ENCODE measurements at regions of chr17 and their contacts with region 1.

Region 1: GRCh38 chr17:82518826-82519810 is at the start of gene FOXK2:
- DNase-seq: peak; percentile 86 to 98 (median 92)
- ATAC-seq: peak; percentile 98
- H3K4me3 ChIP-seq: peak within 1 kb of the TSS; percentile 56 to 84
- H3K4me3 Mint-ChIP-seq: peak within 1 kb of the TSS; percentile 86
- H3K27ac ChIP-seq: peak within 1 kb of the TSS; percentile 84 to 85
- H3K27ac Mint-ChIP-seq: peak within 1 kb of the TSS; percentile 89
- H3K4me1 ChIP-seq: peaks cover 17% of the 10 kb centered on the region
- H3K4me1 Mint-ChIP-seq: peaks cover 31% of the 10 kb centered on the region
- H3K27me3 ChIP-seq: no peaks in the 10 kb centered on the region
- H3K27me3 Mint-ChIP-seq: no peaks in the 10 kb centered on the region
- CTCF ChIP-seq: no peak
- total RNA-seq, gene FOXK2: 36.1 to 37.7 TPM

Region 2: DNA sequence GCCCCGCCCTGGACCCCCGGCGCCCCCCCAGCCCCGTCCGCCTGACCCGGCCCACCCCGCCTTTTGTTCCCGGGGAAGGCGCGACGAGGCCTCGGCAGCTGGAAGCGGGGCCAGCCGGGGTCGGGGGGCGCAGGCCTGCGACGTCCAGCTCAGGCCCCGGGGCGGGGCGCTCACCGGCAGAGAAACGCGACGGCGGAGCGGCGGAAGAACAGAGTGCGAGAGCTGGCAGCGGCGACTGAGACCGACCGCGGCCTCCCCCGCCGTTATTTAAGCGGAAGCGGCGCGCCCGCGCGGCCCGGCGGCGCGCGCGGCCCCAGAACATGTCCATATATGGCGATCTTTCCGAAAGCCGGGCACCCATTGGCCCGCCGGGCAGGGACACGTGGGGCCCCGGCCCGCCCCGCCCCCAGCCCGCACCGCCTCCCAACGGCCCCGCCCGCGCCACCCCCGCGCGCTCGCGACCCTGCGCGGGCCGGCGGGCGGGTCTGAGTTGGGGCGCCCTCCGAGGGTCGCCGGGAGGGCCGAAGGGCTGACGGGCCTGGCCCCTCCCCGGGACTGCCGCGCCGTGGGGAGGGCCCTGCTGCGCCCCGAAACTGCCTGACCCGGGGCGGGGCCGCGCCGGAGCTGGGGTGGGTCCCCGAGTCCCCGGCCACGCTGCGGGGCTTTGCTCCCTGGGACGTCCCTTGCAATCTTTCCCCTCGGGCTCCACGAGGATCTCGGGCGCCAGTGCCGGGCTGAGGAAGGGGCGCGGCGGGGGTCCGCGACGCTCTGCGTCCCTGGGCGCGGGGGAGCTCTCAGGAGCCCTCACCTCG is 1006.4 kb before region 1 on chr17 and contains the start of gene ACTG1:
- CTCF ChIA-PET with region 1: no interaction called
- POLR2A ChIA-PET with region 1: no interaction called
- intact Hi-C with region 1: loop called in 1 of 2 experiments (anchors 5 kb)
- DNase-seq: peak; percentile 87 to 97 (median 92)
- ATAC-seq: peak; percentile 60
- H3K4me3 ChIP-seq: peak within 1 kb of the TSS; percentile 84 to 93
- H3K4me3 Mint-ChIP-seq: peak within 1 kb of the TSS; percentile 98
- H3K27ac ChIP-seq: peak within 1 kb of the TSS; percentile 56 to 93
- H3K27ac Mint-ChIP-seq: peak within 1 kb of the TSS; percentile 98
- H3K4me1 ChIP-seq: peaks cover 49% of the 10 kb centered on the region
- H3K4me1 Mint-ChIP-seq: peaks cover 57% of the 10 kb centered on the region
- H3K27me3 ChIP-seq: no peaks in the 10 kb centered on the region
- H3K27me3 Mint-ChIP-seq: no peaks in the 10 kb centered on the region
- CTCF ChIP-seq: no peak
- total RNA-seq, gene ACTG1: 1,370 to 1,375 TPM

Region 3: GRCh38 chr17:82450170-82451106 is 68.7 kb before region 1 on chr17 and contains the start of gene CYBC1:
- CTCF ChIA-PET with region 1: no interaction called
- POLR2A ChIA-PET with region 1: interaction called, 5 read pairs
- intact Hi-C with region 1: loop called (anchors 1 to 2 kb)
- DNase-seq: peak; percentile 86 to 97 (median 95)
- ATAC-seq: peak; percentile 65
- H3K4me3 ChIP-seq: peak within 1 kb of the TSS; percentile 57 to 77
- H3K4me3 Mint-ChIP-seq: peak within 1 kb of the TSS; percentile 90
- H3K27ac ChIP-seq: peak within 1 kb of the TSS; percentile 87 to 94
- H3K27ac Mint-ChIP-seq: peak within 1 kb of the TSS; percentile 95
- H3K4me1 ChIP-seq: peaks cover 26% of the 10 kb centered on the region
- H3K4me1 Mint-ChIP-seq: peaks cover 40% of the 10 kb centered on the region
- H3K27me3 ChIP-seq: no peaks in the 10 kb centered on the region
- H3K27me3 Mint-ChIP-seq: no peaks in the 10 kb centered on the region
- CTCF ChIP-seq: no peak
- total RNA-seq, gene CYBC1: 52.9 to 63.9 TPM

Region 4: GRCh38 chr17:82494236-82495055 is 24.7 kb before region 1 on chr17:
- CTCF ChIA-PET with region 1: no interaction called
- POLR2A ChIA-PET with region 1: interaction called, 20 read pairs
- intact Hi-C with region 1: loop called (anchors 1 kb)
- DNase-seq: peak; percentile 79 to 94 (median 90)
- ATAC-seq: peak; percentile 76
- H3K4me3 ChIP-seq: no peak overlapping the region
- H3K4me3 Mint-ChIP-seq: peak overlapping the region; percentile 68
- H3K27ac ChIP-seq: peak overlapping the region in 1 of 2 experiments; percentile 57
- H3K27ac Mint-ChIP-seq: peak overlapping the region; percentile 80
- H3K4me1 ChIP-seq: peaks cover 19% of the 10 kb centered on the region
- H3K4me1 Mint-ChIP-seq: peaks cover 24% of the 10 kb centered on the region
- H3K27me3 ChIP-seq: no peaks in the 10 kb centered on the region
- H3K27me3 Mint-ChIP-seq: no peaks in the 10 kb centered on the region
- CTCF ChIP-seq: peak; percentile 67

Region 5: GRCh38 chr17:82592767-82593589 is 73.9 kb after region 1 on chr17:
- CTCF ChIA-PET with region 1: no interaction called
- POLR2A ChIA-PET with region 1: no interaction called
- intact Hi-C with region 1: loop called (anchors 1 to 5 kb)
- DNase-seq: peak; percentile 28 to 86 (median 61)
- ATAC-seq: peak; percentile 41
- H3K4me3 ChIP-seq: peak overlapping the region; percentile 54 to 76
- H3K4me3 Mint-ChIP-seq: peak overlapping the region; percentile 74
- H3K27ac ChIP-seq: peak overlapping the region; percentile 52 to 80
- H3K27ac Mint-ChIP-seq: peak overlapping the region; percentile 89
- H3K4me1 ChIP-seq: peaks cover 37% of the 10 kb centered on the region
- H3K4me1 Mint-ChIP-seq: peaks cover 33% of the 10 kb centered on the region
- H3K27me3 ChIP-seq: no peaks in the 10 kb centered on the region
- H3K27me3 Mint-ChIP-seq: no peaks in the 10 kb centered on the region
- CTCF ChIP-seq: no peak

Measured in CD8-positive, alpha-beta T cell (primary cell).